Ascending aorta (tissue), 2 donors: ENCODE measurements at regions of chr19 and their contacts with region 1.

Region 1: GRCh38 chr19:10717356-10718204 is at the start of gene DNM2:
- DNase-seq: peak; percentile 99 to 100
- H3K4me3 ChIP-seq: peak within 1 kb of the TSS; percentile 95 to 99
- H3K27ac ChIP-seq: peak within 1 kb of the TSS; percentile 89 to 94
- H3K4me1 ChIP-seq: peaks cover 0 to 23% of the 10 kb centered on the region in 2 donors
- H3K27me3 ChIP-seq: no peaks in the 10 kb centered on the region
- CTCF ChIP-seq: peak; percentile 80 to 90 (median 82)
- total RNA-seq, gene DNM2: 113 TPM

Region 2: GRCh38 chr19:10653715-10654492 is 63.7 kb before region 1 on chr19 and contains the start of gene ILF3:
- intact Hi-C with region 1: loop called (anchors 5 kb)
- DNase-seq: peak; percentile 99 to 100
- H3K4me3 ChIP-seq: peak within 1 kb of the TSS; percentile 94 to 97
- H3K27ac ChIP-seq: peak within 1 kb of the TSS; percentile 97 to 100
- H3K4me1 ChIP-seq: peaks cover 0 to 23% of the 10 kb centered on the region in 2 donors
- H3K27me3 ChIP-seq: no peaks in the 10 kb centered on the region
- CTCF ChIP-seq: no peak
- total RNA-seq, gene ILF3: 168 TPM

Region 3: DNA sequence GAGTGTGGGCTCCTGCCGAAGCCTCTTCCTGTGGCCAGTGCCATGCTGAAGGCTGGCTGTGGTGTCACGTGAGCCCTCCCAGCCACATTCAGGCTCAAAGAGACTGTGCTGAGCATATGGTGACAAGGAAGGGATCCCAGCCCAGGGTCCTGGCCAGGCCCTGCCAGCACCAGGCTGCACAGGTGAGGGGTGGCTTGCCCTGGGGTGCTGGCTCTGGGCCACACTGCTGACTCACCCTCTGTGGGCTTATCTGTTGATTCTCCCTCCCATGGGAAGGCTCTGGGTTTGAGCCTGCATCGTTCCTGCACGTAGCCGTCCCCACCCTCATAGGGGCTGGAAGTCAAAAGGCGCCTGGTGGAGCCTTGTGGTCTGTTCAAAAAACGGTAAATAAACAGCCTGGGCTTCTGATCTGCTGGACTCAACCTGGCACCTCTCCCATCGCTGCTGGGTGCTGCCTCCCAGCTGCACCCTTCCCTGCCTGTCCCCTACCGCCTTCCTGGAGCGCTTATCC is 31.4 kb after region 1 on chr19:
- intact Hi-C with region 1: loop called (anchors 2 kb)
- DNase-seq: no peak
- H3K4me3 ChIP-seq: no peak overlapping the region
- H3K27ac ChIP-seq: peak overlapping the region; percentile 49 to 71
- H3K4me1 ChIP-seq: peaks cover 13 to 28% of the 10 kb centered on the region in 2 donors
- H3K27me3 ChIP-seq: no peaks in the 10 kb centered on the region
- CTCF ChIP-seq: no peak

Region 4: DNA sequence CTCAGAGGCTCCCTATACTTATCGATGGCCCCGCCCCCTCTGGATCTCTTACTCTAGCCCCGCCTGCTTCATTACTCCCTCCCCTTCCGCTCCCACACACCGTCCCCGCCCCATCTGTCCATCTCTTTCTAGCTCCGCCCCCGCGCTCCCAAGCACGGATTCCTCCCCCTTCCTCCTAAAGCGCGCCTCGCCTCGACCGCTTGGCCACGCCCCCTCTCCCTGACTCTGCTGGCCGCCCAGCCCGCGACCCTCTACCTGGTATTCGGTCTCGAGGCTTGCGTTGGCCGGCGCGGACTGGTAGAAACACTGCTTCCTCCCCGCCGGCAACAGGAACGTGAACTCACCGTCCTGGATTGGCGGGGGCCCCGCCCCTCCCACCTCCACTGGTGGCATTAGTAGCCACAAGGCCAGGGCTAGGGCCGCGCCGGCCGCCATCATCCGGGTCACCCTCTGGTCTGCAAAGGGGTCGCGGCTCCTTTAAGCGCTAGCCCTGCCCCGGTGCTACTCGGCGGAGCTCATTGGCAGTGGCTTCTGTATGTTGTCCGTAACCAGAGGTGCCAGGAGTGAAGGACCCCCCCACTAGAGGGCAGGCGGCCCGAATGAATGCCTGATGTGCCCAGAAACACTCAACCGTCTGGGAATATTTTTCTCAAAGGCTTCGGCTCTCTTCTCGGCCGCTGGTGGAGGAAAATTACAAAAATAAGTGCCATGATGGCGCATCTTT is 118.3 kb after region 1 on chr19 and contains the start of gene TMED1:
- intact Hi-C with region 1: loop called (anchors 1 kb)
- DNase-seq: peak; percentile 91 to 98
- H3K4me3 ChIP-seq: peak within 1 kb of the TSS; percentile 71 to 86
- H3K27ac ChIP-seq: peak within 1 kb of the TSS; percentile 96 to 99
- H3K4me1 ChIP-seq: peaks cover 0 to 7% of the 10 kb centered on the region in 2 donors
- H3K27me3 ChIP-seq: no peaks in the 10 kb centered on the region
- CTCF ChIP-seq: peak in 2 of 3 experiments; percentile 41 to 46
- total RNA-seq, gene TMED1: 25.0 TPM

Region 5: GRCh38 chr19:10870955-10871603 is 153.5 kb after region 1 on chr19 and contains the start of gene CARM1:
- intact Hi-C with region 1: loop called (anchors 1 kb)
- DNase-seq: peak; percentile 98 to 100
- H3K4me3 ChIP-seq: peak within 1 kb of the TSS; percentile 88 to 96
- H3K27ac ChIP-seq: peak within 1 kb of the TSS; percentile 55 to 86
- H3K4me1 ChIP-seq: peaks cover 3 to 10% of the 10 kb centered on the region in 2 donors
- H3K27me3 ChIP-seq: no peaks in the 10 kb centered on the region
- CTCF ChIP-seq: peak; percentile 33 to 94 (median 54)
- total RNA-seq, gene CARM1: 22.9 TPM